Psoas muscle (tissue), 8 donors: ENCODE measurements at regions of chr17 and their contacts with region 1.

Region 1: DNA sequence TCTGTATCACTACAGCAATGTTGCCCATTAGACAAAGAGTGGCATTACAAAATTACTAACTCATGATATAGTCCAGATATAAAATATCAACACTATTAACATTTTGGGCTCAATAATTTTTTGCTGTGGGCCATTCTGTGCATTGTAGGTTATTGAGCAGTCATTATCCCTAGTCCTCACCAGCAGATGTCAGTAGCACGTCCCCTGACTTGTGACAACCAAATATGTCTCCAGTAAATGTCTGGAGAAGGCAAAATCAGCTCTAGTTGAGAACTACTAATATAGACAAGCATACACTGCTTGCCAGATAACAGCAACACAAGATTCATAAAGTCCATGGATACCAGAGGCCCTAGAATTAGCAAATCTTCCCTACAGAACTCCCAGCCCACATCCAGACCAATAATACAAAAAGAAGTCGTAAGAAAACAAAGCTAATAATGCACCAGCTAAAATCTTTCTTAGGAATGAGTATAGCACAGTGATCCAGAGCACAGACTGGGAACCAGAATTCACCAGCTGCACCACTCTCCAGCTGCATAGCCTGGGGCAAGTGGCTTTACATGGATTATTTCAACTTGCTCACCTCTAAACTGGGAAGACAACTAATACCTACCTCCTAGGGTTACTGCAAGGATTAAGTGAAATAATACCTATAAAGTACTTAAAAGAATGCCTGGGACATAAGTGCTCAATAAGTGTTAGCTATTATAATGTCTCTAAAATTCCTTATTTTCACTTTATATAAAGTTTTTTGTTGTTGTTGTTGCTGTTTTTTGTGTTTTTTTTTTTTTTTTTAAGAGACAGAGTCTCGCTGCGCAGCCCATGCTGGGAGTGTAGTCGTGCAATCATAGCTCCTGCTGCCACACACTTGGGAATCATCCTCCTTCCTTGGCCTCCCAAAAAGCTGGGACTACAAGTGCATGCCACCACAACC is 23.7 kb downstream of the HELZ start:
- DNase-seq: no peak
- ATAC-seq: peak in 3 of 4 donors; percentile 64 to 86 (median 67)
- H3K4me3 ChIP-seq: no peak overlapping the region
- H3K27ac ChIP-seq: no peak overlapping the region
- H3K4me1 ChIP-seq: peaks cover 28% of the 10 kb centered on the region
- H3K27me3 ChIP-seq: no peaks in the 10 kb centered on the region
- CTCF ChIP-seq: peak; percentile 64

Region 2: DNA sequence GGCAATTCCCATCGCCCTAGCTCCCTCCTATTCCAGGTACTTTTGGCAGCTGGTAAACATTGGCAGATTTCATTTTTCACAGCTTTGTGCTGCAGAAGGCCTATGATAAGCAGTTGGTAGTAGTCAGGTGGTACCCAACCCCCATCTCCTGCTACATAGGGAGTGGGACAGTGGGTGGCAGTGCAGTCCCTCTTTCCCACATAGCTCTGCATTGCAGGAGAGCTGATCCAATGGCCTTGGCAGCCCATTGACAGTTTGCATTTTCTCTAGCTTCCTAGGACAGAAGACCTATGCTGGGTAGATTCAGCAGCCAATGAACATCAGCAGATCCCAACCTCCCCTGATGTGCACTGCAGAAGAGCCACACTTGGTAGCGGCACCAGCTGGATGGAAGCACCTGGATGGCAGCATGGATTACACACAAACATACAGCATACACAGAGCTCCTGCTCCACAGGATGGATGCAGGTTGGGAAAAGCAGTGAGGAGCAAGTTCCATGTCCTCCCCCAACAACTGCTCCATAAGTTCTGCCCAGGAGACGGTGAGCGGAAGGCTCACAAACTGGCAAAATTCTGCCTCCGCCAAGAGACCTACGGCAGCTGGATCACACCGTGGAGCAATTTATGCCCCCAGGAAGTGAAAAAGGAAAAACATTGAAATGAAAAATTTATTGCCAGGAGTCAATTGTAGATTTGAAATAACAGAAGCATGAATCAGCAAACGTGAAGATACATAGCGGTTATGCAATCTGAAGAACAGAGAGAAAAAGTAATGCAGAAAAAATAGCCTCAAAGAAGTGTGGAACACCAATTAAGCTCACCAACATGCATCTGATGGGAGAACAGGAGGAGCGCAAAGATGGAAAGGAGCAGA is 81.3 kb before region 1 on chr17:
- intact Hi-C with region 1: no loop called
- DNase-seq: no peak
- ATAC-seq: peak in 3 of 4 donors; percentile 27 to 48 (median 43)
- H3K4me3 ChIP-seq: no peak overlapping the region
- H3K27ac ChIP-seq: no peak overlapping the region
- H3K4me1 ChIP-seq: no peaks in the 10 kb centered on the region
- H3K27me3 ChIP-seq: no peaks in the 10 kb centered on the region
- CTCF ChIP-seq: no peak

Region 3: GRCh38 chr17:67165201-67165600 is 56.1 kb before region 1 on chr17:
- intact Hi-C with region 1: loop called in 1 of 2 experiments (anchors 10 kb)
- DNase-seq: peak in 1 of 2 donors; percentile 19
- ATAC-seq: peak; percentile 32 to 65 (median 64)
- H3K4me3 ChIP-seq: no peak overlapping the region
- H3K27ac ChIP-seq: no peak overlapping the region
- H3K4me1 ChIP-seq: peaks cover 12% of the 10 kb centered on the region
- H3K27me3 ChIP-seq: no peaks in the 10 kb centered on the region
- CTCF ChIP-seq: no peak

Region 4: DNA sequence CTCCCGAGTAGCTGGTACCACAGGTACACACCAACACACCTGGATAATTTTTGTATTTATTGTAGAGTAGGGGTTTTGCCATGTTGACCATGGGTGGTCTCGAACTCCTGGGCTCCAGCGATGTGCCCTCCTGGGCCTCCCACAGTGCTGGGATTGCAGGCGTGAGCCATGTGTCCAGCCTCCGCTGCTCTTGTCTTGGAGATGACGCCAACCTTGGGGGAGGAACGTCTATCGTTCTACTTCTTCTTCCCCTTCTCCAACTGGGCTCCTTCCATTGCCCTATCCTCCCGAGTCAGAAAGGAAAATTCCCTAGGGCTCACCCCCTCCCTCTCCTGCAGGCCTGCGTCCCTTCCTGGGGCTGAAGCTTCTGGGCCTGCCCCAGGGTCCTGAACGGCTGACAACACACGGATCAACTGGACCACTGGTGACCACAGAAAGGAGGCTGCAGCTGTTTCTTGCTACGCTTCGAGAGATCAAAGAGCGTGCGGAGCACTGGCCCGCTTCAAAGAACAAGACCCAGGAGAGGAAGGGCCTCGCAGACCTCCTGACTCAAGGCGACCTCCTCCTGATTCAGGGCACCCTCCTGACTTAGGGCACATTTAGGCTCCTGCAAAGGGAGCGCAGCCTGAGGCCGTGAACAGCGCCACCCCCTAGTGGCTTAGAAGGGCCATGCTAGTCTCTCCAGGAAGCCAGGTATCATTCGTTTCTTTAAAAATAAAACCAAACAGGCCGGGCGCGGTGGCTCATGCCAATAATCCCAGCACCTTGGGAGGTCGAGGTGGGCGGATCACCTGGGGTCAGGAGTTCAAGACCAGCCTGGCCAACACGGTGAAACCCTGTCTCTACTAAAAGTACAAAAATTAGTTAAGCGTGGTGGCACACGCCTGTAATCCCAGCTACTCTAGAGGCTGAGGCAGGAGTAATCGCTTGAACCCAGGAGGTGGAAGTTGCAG is 72.2 kb after region 1 on chr17:
- intact Hi-C with region 1: loop called (anchors 1 to 2 kb)
- DNase-seq: peak; percentile 55 to 82
- ATAC-seq: peak; percentile 79 to 91 (median 84)
- H3K4me3 ChIP-seq: peak overlapping the region; percentile 19
- H3K27ac ChIP-seq: no peak overlapping the region
- H3K4me1 ChIP-seq: peaks cover 8% of the 10 kb centered on the region
- H3K27me3 ChIP-seq: no peaks in the 10 kb centered on the region
- CTCF ChIP-seq: peak; percentile 84